CD14-positive monocyte (primary cell): ENCODE measurements at regions of chr4 and their contacts with region 1.

Region 1: GRCh38 chr4:107989537-107990386 is at the start of gene HADH:
- DNase-seq: peak; percentile 88 to 90 (median 90)
- H3K4me3 ChIP-seq: peak within 1 kb of the TSS; percentile 51 to 88 (median 84)
- H3K4me3 Mint-ChIP-seq: peak within 1 kb of the TSS; percentile 98 to 99
- H3K27ac ChIP-seq: peak within 1 kb of the TSS; percentile 15 to 83
- H3K27ac Mint-ChIP-seq: peak within 1 kb of the TSS; percentile 78 to 93 (median 88)
- H3K4me1 ChIP-seq: peaks cover 20 to 29% of the 10 kb centered on the region in 2 donors
- H3K4me1 Mint-ChIP-seq: peaks cover 45% of the 10 kb centered on the region
- H3K27me3 ChIP-seq: no peaks in the 10 kb centered on the region
- H3K27me3 Mint-ChIP-seq: no peaks in the 10 kb centered on the region
- CTCF ChIP-seq: no peak
- polyA plus RNA-seq, gene HADH: 8.4 to 19.4 (median 19.4) TPM

Region 2: GRCh38 chr4:107468812-107469211 is 521.0 kb before region 1 on chr4:
- intact Hi-C with region 1: no loop called
- DNase-seq: no peak
- H3K4me3 ChIP-seq: no peak overlapping the region
- H3K4me3 Mint-ChIP-seq: no peak overlapping the region
- H3K27ac ChIP-seq: no peak overlapping the region
- H3K27ac Mint-ChIP-seq: no peak overlapping the region
- H3K4me1 ChIP-seq: no peaks in the 10 kb centered on the region
- H3K4me1 Mint-ChIP-seq: no peaks in the 10 kb centered on the region
- H3K27me3 ChIP-seq: no peaks in the 10 kb centered on the region
- H3K27me3 Mint-ChIP-seq: peaks cover 0 to 1% (median 0%) of the 10 kb centered on the region in 3 donors
- CTCF ChIP-seq: no peak

Region 3: GRCh38 chr4:107818301-107818910 is 171.4 kb before region 1 on chr4:
- intact Hi-C with region 1: loop called (anchors 10 kb)
- DNase-seq: peak; percentile 74 to 82 (median 79)
- H3K4me3 ChIP-seq: peak overlapping the region in 1 of 3 experiments; percentile 45
- H3K4me3 Mint-ChIP-seq: peak overlapping the region in 1 of 2 donors; percentile 19
- H3K27ac ChIP-seq: peak overlapping the region; percentile 28 to 73
- H3K27ac Mint-ChIP-seq: peak overlapping the region; percentile 60 to 95 (median 92)
- H3K4me1 ChIP-seq: peaks cover 24 to 36% of the 10 kb centered on the region in 2 donors
- H3K4me1 Mint-ChIP-seq: peaks cover 40% of the 10 kb centered on the region
- H3K27me3 ChIP-seq: no peaks in the 10 kb centered on the region
- H3K27me3 Mint-ChIP-seq: peaks cover 0 to 8% (median 1%) of the 10 kb centered on the region in 3 donors
- CTCF ChIP-seq: no peak

Region 4: GRCh38 chr4:107853444-107854355 is 136.1 kb before region 1 on chr4:
- intact Hi-C with region 1: no loop called
- DNase-seq: peak in 1 of 3 donors; percentile 35
- H3K4me3 ChIP-seq: peak overlapping the region in 2 of 3 experiments; percentile 16 to 54
- H3K4me3 Mint-ChIP-seq: peak overlapping the region in 1 of 2 donors; percentile 59
- H3K27ac ChIP-seq: peak overlapping the region in 1 of 2 donors; percentile 72
- H3K27ac Mint-ChIP-seq: peak overlapping the region; percentile 63 to 85 (median 78)
- H3K4me1 ChIP-seq: peaks cover 20 to 31% of the 10 kb centered on the region in 2 donors
- H3K4me1 Mint-ChIP-seq: peaks cover 58% of the 10 kb centered on the region
- H3K27me3 ChIP-seq: no peaks in the 10 kb centered on the region
- H3K27me3 Mint-ChIP-seq: no peaks in the 10 kb centered on the region
- CTCF ChIP-seq: no peak

Region 5: DNA sequence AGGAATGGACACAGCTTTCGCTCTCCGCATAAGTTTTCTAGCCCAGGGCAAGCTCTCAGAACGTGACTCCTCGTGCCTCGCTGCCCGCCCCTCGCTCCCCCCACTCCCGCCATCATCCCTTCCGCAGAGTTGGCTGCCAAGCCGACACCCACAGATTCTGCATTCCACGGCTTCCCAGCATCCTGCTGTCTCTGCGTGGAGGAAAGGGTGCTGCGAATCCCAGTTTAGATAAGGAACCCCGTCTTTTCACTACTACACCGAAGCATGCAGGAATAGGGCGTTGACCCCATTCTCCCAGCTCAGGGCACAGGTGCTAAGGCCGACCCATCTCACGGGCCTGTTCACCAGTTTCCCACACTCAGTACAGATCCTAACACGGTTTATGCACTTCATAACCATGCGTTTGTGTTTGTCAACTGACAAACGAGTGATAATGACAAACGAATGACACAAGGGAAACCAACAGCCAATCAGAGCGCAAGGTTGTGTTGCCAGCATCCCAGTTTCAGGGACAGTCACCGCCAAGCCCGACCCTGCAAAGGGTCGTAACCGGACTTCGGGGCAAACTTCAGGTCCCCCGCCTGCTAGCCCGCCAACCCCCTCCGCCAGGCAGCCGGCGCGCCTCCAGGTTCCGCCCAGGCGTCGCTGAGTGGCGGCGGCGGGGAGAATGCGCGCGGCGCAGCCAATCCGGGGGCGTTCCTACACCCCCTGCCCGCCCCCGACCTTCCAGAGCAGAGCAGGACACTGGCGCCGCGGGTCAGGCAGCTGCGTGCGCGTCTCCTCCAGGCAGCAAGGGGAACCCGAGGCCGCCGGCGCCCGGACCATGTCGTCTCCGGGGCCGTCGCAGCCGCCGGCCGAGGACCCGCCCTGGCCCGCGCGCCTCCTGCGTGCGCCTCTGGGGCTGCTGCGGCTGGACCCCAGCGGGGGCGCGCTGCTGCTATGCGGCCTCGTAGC is 58.7 kb before region 1 on chr4 and contains the start of gene CYP2U1:
- intact Hi-C with region 1: loop called in 1 of 2 experiments (anchors 10 kb)
- DNase-seq: peak; percentile 73 to 76 (median 75)
- H3K4me3 ChIP-seq: peak within 1 kb of the TSS; percentile 59 to 84 (median 70)
- H3K4me3 Mint-ChIP-seq: peak within 1 kb of the TSS; percentile 91 to 95
- H3K27ac ChIP-seq: peak within 1 kb of the TSS in 1 of 2 donors; percentile 34
- H3K27ac Mint-ChIP-seq: peak within 1 kb of the TSS in 5 of 7 donors; percentile 68 to 89 (median 75)
- H3K4me1 ChIP-seq: peaks cover 15 to 16% of the 10 kb centered on the region in 2 donors
- H3K4me1 Mint-ChIP-seq: peaks cover 18% of the 10 kb centered on the region
- H3K27me3 ChIP-seq: peaks cover 5 to 11% of the 10 kb centered on the region in 2 donors
- H3K27me3 Mint-ChIP-seq: peaks cover 0 to 15% (median 12%) of the 10 kb centered on the region in 3 donors
- CTCF ChIP-seq: no peak
- polyA plus RNA-seq, gene CYP2U1: 0.77 to 1.7 (median 1.5) TPM

Region 6: DNA sequence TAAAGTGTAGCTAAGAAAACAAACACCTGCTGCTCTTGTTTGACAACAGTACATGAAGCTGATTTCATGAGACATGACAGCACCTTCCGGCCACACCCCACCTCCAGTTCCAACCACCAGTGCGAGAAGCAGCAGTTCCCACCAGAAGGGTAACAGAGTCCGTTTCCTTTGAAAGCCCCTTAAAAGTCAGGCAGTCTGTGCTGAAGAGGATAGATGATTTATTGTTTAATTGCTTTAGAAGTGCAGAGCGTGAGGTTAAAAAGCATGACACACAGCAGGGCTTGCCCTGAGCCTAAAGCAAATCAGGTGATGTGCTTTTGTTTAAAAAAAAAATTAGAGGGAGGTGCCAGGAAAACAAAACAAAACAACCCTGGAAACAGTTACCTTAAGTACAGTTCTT is 82.5 kb after region 1 on chr4:
- intact Hi-C with region 1: no loop called
- DNase-seq: no peak
- H3K4me3 ChIP-seq: no peak overlapping the region
- H3K4me3 Mint-ChIP-seq: no peak overlapping the region
- H3K27ac ChIP-seq: no peak overlapping the region
- H3K27ac Mint-ChIP-seq: no peak overlapping the region
- H3K4me1 ChIP-seq: no peaks in the 10 kb centered on the region
- H3K4me1 Mint-ChIP-seq: no peaks in the 10 kb centered on the region
- H3K27me3 ChIP-seq: no peaks in the 10 kb centered on the region
- H3K27me3 Mint-ChIP-seq: peaks cover 0 to 4% (median 2%) of the 10 kb centered on the region in 3 donors
- CTCF ChIP-seq: no peak

Region 7: GRCh38 chr4:109989044-109989443 is 1999.3 kb after region 1 on chr4:
- intact Hi-C with region 1: no loop called
- DNase-seq: peak; percentile 25 to 62 (median 31)
- H3K4me3 ChIP-seq: no peak overlapping the region
- H3K4me3 Mint-ChIP-seq: no peak overlapping the region
- H3K27ac ChIP-seq: no peak overlapping the region
- H3K27ac Mint-ChIP-seq: peak overlapping the region in 4 of 7 donors; percentile 12 to 90 (median 62)
- H3K4me1 ChIP-seq: peaks cover 51 to 53% of the 10 kb centered on the region in 2 donors
- H3K4me1 Mint-ChIP-seq: peaks cover 43% of the 10 kb centered on the region
- H3K27me3 ChIP-seq: no peaks in the 10 kb centered on the region
- H3K27me3 Mint-ChIP-seq: peaks cover 0 to 2% (median 0%) of the 10 kb centered on the region in 3 donors
- CTCF ChIP-seq: no peak